Naive thymus-derived CD4-positive, alpha-beta T cell (primary cell): ENCODE measurements at regions of chr2 and their contacts with region 1.

Region 1: DNA sequence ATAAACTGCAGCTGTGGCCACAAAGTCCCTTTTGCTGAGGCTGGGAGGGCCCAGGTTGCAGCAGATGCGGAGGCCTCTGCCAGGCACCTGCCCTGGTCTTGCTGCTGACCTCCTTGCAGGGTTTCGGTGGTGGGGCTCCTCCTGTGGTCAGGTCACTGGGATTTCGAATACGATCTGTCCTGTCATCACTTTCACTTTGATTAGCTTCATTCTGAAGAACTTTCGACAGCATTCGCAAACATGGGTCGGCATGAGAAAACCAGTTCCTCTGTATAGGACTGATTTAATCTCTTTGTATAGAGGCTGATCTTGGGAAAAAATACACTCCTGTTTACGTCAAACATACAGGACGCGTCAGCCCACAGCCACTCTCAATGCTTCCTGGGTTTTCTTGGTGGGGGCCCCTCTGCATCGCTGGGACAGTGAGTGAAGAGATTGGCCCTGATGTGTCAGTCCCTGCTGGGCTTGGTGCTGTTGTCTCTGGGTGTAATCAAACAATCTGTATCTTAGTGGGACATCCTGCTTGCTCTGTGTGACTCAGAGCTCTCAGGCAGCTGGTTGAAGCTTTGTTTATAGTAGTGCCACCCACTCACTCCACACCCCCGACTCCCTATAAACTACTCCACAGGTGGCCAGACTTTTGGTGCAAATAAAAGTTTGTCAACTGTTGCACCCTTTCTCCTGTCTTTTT is 209.4 kb upstream of the CXCR4 start:
- DNase-seq: peak; percentile 28 to 90 (median 83)
- ATAC-seq: peak; percentile 93
- H3K4me3 ChIP-seq: peak overlapping the region; percentile 38
- H3K4me3 Mint-ChIP-seq: peak overlapping the region; percentile 74 to 89 (median 82)
- H3K27ac ChIP-seq: peak overlapping the region; percentile 74
- H3K27ac Mint-ChIP-seq: peak overlapping the region; percentile 93 to 99 (median 97)
- H3K4me1 ChIP-seq: peaks cover 17 to 44% of the 10 kb centered on the region in 2 donors
- H3K4me1 Mint-ChIP-seq: peaks cover 43 to 73% (median 62%) of the 10 kb centered on the region in 7 donors
- H3K27me3 ChIP-seq: no peaks in the 10 kb centered on the region
- H3K27me3 Mint-ChIP-seq: no peaks in the 10 kb centered on the region

Region 2: DNA sequence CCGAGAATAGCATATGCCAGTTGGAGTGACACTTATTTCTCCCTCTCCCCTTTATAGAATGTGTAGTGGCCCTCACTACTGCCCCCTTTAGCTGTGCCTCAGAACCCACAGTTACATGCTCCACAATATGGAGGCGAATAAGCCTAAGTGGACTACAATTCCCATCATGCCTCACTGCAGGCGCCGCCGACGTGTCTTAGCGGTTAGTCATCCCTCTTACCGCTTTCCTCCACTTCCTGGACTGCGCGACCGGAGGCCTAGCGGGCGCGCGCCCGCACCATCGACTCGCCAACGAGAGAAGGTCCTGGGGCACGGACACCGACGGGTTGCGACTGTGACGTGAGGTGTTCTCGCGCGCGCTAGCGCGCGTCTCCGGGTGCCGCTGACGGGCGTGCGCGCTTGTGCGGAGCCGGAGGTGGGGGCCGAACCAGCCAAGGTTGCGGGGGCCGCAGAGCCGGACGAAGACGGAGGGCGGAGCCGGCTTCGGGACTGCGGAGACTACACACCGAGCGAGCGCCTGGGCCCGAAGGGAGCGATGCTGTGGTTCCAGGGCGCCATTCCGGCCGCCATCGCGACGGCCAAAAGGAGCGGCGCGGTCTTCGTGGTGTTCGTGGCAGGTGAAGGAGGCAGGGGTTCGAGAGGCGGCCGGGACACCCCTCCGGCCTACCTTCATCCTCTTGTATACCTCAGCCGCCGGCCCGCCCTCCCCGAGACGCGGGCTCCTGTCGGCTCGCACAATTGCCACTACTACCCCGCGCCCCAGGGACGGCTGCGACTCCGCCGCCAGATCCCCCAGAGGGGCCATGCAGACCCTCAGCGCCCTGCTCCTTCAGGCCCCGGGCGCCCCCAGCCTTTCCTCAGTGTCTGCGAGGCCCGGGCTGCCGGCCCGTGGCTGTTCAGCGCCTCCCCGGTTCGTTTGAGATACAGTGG is 585.6 kb before region 1 on chr2 and contains the start of gene UBXN4:
- CTCF ChIA-PET with region 1: no interaction called
- POLR2A ChIA-PET with region 1: no interaction called
- intact Hi-C with region 1: loop called in 1 of 2 experiments (anchors 5 kb)
- DNase-seq: peak; percentile 73 to 93 (median 88)
- ATAC-seq: peak; percentile 95
- H3K4me3 ChIP-seq: peak within 1 kb of the TSS; percentile 88
- H3K4me3 Mint-ChIP-seq: peak within 1 kb of the TSS; percentile 92 to 98 (median 95)
- H3K27ac ChIP-seq: peak within 1 kb of the TSS; percentile 97
- H3K27ac Mint-ChIP-seq: peak within 1 kb of the TSS; percentile 89 to 99 (median 95)
- H3K4me1 ChIP-seq: peaks cover 20 to 22% of the 10 kb centered on the region in 2 donors
- H3K4me1 Mint-ChIP-seq: peaks cover 24 to 47% (median 43%) of the 10 kb centered on the region in 7 donors
- H3K27me3 ChIP-seq: no peaks in the 10 kb centered on the region
- H3K27me3 Mint-ChIP-seq: no peaks in the 10 kb centered on the region
- total RNA-seq, gene UBXN4: 115 to 158 (median 145) TPM

Region 3: DNA sequence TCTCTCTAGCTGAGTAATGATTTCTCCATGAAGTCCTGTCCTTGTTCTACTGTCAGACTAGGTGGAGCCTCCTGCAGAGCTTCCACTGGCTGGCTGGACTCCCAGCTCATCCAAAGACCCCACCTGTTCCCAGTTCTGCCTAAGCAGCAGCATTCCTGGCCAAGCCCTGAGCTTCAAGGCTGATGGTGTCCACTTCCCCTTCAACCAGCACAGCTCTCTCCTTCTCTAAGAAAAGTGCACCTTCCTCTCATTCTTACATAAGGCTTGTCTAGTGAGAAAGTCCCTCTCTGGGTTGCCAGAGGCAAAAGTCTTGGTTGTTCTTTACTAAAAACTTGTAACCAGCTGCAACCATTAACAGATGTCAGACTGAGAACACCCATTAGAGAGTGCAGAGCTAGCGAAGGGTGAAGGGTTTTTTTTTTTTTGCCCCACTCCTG is 268.3 kb before region 1 on chr2:
- CTCF ChIA-PET with region 1: no interaction called
- POLR2A ChIA-PET with region 1: interaction called, 4 read pairs
- intact Hi-C with region 1: loop called in 1 of 2 experiments (anchors 2 kb)
- DNase-seq: no peak
- ATAC-seq: no peak
- H3K4me3 ChIP-seq: no peak overlapping the region
- H3K4me3 Mint-ChIP-seq: peak overlapping the region in 2 of 10 donors; percentile 43 to 50
- H3K27ac ChIP-seq: no peak overlapping the region
- H3K27ac Mint-ChIP-seq: peak overlapping the region in 5 of 9 donors; percentile 16 to 90 (median 65)
- H3K4me1 ChIP-seq: peaks cover 43 to 44% of the 10 kb centered on the region in 2 donors
- H3K4me1 Mint-ChIP-seq: peaks cover 46 to 90% (median 80%) of the 10 kb centered on the region in 7 donors
- H3K27me3 ChIP-seq: no peaks in the 10 kb centered on the region
- H3K27me3 Mint-ChIP-seq: no peaks in the 10 kb centered on the region

Region 4: DNA sequence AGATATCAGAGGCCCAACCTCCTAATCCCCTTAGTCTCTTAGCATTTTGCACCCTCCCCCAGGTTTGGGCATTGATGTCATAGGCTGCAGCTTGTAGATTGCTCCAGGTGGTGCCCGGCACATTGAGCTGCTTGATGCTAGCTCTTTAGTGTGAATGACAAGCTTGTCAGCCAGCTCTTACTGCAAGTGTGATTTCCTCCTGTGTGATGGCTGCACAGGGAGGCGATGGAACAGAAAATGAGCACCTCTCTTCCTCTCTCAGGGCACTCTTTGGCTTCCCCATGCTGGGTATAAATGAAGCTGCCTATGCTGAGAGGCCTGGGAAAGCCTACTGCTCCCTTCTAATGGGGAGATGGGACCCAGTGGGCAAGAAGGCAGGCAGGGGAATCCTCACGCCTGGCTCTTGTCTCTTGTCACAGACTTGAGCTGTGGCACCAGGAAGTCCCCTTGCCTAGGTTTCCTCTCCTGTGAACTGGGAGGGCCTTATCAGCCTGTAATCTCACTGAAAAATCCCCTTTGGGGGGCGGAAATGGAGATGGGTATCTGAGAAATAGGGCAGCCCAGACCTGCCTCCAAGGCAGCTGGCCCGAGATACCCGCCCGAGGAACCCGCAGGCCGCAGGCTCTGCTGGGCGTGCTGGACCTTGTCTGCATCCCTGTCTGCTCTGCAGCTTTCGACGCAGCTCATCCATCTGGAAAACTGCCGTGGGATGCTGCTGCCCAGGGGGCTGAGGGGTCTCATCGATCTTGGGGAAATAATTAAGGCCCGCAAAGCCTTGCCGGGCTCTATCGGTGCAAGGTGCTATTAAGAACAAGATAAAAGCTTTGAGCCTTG is 45.8 kb before region 1 on chr2:
- CTCF ChIA-PET with region 1: no interaction called
- POLR2A ChIA-PET with region 1: interaction called, 3 read pairs
- intact Hi-C with region 1: loop called (anchors 1 to 2 kb)
- DNase-seq: peak; percentile 24 to 73 (median 53)
- ATAC-seq: peak; percentile 91
- H3K4me3 ChIP-seq: no peak overlapping the region
- H3K4me3 Mint-ChIP-seq: peak overlapping the region; percentile 16 to 79 (median 52)
- H3K27ac ChIP-seq: peak overlapping the region; percentile 58
- H3K27ac Mint-ChIP-seq: peak overlapping the region; percentile 86 to 98 (median 94)
- H3K4me1 ChIP-seq: peaks cover 26 to 33% of the 10 kb centered on the region in 2 donors
- H3K4me1 Mint-ChIP-seq: peaks cover 28 to 59% (median 50%) of the 10 kb centered on the region in 7 donors
- H3K27me3 ChIP-seq: no peaks in the 10 kb centered on the region
- H3K27me3 Mint-ChIP-seq: no peaks in the 10 kb centered on the region

Region 5: GRCh38 chr2:136378712-136379595 is 51.6 kb after region 1 on chr2:
- CTCF ChIA-PET with region 1: interaction called, 4 read pairs
- POLR2A ChIA-PET with region 1: interaction called, 12 read pairs
- intact Hi-C with region 1: loop called (anchors 1 to 2 kb)
- DNase-seq: peak; percentile 44 to 81 (median 75)
- ATAC-seq: peak; percentile 69
- H3K4me3 ChIP-seq: no peak overlapping the region
- H3K4me3 Mint-ChIP-seq: peak overlapping the region in 1 of 10 donors; percentile 12
- H3K27ac ChIP-seq: no peak overlapping the region
- H3K27ac Mint-ChIP-seq: peak overlapping the region in 6 of 9 donors; percentile 48 to 93 (median 82)
- H3K4me1 ChIP-seq: peaks cover 20 to 34% of the 10 kb centered on the region in 2 donors
- H3K4me1 Mint-ChIP-seq: peaks cover 32 to 84% (median 65%) of the 10 kb centered on the region in 7 donors
- H3K27me3 ChIP-seq: no peaks in the 10 kb centered on the region
- H3K27me3 Mint-ChIP-seq: no peaks in the 10 kb centered on the region